ENCODE measurements at regions of chr12 and their contacts with region 1.

Region 1: GRCh38 chr12:116277393-116278278 is at the start of gene MED13L:
- DNase-seq: peak; percentile 83 to 95
- H3K4me3 ChIP-seq: peak within 1 kb of the TSS; percentile 58 to 70
- H3K27ac ChIP-seq: peak within 1 kb of the TSS; percentile 89 to 97
- H3K4me1 ChIP-seq: peaks cover 0 to 35% (median 18%) of the 10 kb centered on the region in 4 donors
- H3K27me3 ChIP-seq: no peaks in the 10 kb centered on the region
- CTCF ChIP-seq: peak; percentile 25 to 44

Region 2: GRCh38 chr12:116426391-116427136 is 148.9 kb after region 1 on chr12:
- intact Hi-C with region 1: loop called (anchors 5 kb)
- DNase-seq: peak; percentile 79 to 88
- H3K4me3 ChIP-seq: no peak overlapping the region
- H3K27ac ChIP-seq: peak overlapping the region; percentile 16 to 38
- H3K4me1 ChIP-seq: peaks cover 0 to 24% (median 20%) of the 10 kb centered on the region in 4 donors
- H3K27me3 ChIP-seq: no peaks in the 10 kb centered on the region
- CTCF ChIP-seq: peak; percentile 39 to 49

Region 3: GRCh38 chr12:116599285-116600136 is 321.9 kb after region 1 on chr12:
- intact Hi-C with region 1: loop called (anchors 2 kb)
- DNase-seq: peak; percentile 88 to 90
- H3K4me3 ChIP-seq: peak overlapping the region; percentile 33 to 47
- H3K27ac ChIP-seq: peak overlapping the region; percentile 80 to 85
- H3K4me1 ChIP-seq: peaks cover 0 to 41% (median 25%) of the 10 kb centered on the region in 4 donors
- H3K27me3 ChIP-seq: no peaks in the 10 kb centered on the region
- CTCF ChIP-seq: peak; percentile 53 to 70

Region 4: DNA sequence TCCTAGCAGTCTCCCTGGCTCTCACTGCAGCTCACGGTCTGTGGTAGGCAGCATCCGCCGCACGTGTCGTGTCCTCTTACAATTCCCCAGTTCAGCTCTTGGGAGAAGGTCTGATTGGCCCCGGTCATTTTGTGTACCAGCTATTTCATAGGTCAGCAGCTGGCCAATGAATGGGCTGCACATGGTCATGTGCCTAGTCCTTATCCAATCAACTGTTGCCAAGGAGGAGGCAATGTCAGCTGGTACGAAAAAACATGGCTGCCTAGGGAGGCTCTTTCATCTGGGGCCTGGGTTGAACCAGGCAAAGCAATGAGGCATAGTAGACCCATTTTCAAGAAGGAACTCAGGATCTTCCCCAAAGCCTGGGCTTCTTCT is 506.6 kb after region 1 on chr12:
- intact Hi-C with region 1: no loop called
- DNase-seq: no peak
- H3K4me3 ChIP-seq: no peak overlapping the region
- H3K27ac ChIP-seq: no peak overlapping the region
- H3K4me1 ChIP-seq: no peaks in the 10 kb centered on the region
- H3K27me3 ChIP-seq: no peaks in the 10 kb centered on the region
- CTCF ChIP-seq: no peak